Psoas muscle (tissue), 8 donors: ENCODE measurements at regions of chr21 and their contacts with region 1.

Region 1: DNA sequence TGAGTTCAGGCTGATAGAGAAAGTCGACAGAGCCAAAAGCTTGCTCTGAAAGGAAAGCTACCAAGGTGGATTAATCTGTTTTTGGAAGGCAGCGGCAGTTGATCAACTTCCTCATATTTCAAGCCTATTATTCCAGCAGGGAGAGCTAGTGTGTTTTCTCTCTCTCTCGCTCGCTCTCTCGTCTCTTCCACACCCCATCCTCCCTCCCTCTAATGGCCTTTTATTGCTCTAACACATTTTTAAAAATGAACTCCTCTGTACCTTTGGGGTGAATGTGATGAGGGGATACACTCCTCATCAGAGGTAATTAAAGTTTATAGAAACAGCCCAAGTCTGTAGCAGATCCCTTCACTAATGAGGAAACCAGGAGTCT is 126.4 kb downstream of the CLIC6 start:
- DNase-seq: no peak
- ATAC-seq: peak; percentile 21 to 68 (median 39)
- H3K4me3 ChIP-seq: peak overlapping the region; percentile 17
- H3K27ac ChIP-seq: peak overlapping the region; percentile 75
- H3K4me1 ChIP-seq: peaks cover 54% of the 10 kb centered on the region
- H3K27me3 ChIP-seq: no peaks in the 10 kb centered on the region
- CTCF ChIP-seq: peak; percentile 10

Region 2: GRCh38 chr21:34737107-34737506 is 58.1 kb before region 1 on chr21:
- intact Hi-C with region 1: loop called in 1 of 2 experiments (anchors 5 kb)
- DNase-seq: no peak
- ATAC-seq: peak; percentile 61 to 73 (median 68)
- H3K4me3 ChIP-seq: peak overlapping the region; percentile 31
- H3K27ac ChIP-seq: peak overlapping the region; percentile 90
- H3K4me1 ChIP-seq: peaks cover 40% of the 10 kb centered on the region
- H3K27me3 ChIP-seq: peaks cover 0 to 5% (median 0%) of the 10 kb centered on the region in 3 donors
- CTCF ChIP-seq: no peak

Region 3: DNA sequence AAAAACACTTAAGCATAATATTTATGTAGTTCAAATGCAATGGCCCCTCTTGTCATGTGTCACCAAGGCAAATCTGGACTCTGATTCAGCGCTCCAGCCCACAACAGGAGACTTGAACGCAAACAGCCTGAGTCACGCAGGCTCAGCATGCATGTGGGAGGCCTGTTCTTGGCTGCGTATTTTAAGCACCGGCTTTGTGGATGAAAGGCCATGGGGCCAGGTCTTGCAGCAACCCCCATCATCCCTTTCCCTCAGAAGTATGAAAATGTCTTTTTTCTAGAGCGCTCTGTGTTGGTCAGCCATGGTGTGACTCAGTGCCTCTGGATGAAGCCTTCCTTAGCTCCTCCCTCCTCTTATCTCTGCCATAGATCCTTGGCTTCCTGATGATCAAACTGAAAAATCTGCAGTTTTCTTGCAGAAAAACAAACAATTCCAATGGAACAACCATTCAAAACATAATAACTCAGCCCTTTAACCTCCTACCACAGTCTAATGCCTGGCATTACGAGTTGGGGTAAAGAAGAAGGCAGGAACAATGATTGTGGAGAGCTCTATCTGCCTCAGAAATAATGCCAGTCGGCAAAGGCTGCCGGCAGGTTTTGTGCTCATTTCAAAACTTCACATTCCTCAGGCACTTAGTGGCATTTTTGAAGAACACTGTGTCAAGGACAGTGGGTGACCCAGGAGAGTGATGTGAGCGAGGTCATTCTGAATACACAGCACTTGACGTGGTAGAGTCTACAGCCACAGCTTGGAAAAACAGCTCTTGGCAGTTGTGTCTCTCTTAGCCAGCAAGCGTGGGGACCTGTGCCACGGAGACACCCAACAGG is 41.2 kb after region 1 on chr21:
- intact Hi-C with region 1: loop called (anchors 5 kb)
- DNase-seq: peak; percentile 85 to 88
- ATAC-seq: peak; percentile 76 to 94 (median 90)
- H3K4me3 ChIP-seq: no peak overlapping the region
- H3K27ac ChIP-seq: peak overlapping the region; percentile 64
- H3K4me1 ChIP-seq: peaks cover 24% of the 10 kb centered on the region
- H3K27me3 ChIP-seq: no peaks in the 10 kb centered on the region
- CTCF ChIP-seq: no peak

Region 4: DNA sequence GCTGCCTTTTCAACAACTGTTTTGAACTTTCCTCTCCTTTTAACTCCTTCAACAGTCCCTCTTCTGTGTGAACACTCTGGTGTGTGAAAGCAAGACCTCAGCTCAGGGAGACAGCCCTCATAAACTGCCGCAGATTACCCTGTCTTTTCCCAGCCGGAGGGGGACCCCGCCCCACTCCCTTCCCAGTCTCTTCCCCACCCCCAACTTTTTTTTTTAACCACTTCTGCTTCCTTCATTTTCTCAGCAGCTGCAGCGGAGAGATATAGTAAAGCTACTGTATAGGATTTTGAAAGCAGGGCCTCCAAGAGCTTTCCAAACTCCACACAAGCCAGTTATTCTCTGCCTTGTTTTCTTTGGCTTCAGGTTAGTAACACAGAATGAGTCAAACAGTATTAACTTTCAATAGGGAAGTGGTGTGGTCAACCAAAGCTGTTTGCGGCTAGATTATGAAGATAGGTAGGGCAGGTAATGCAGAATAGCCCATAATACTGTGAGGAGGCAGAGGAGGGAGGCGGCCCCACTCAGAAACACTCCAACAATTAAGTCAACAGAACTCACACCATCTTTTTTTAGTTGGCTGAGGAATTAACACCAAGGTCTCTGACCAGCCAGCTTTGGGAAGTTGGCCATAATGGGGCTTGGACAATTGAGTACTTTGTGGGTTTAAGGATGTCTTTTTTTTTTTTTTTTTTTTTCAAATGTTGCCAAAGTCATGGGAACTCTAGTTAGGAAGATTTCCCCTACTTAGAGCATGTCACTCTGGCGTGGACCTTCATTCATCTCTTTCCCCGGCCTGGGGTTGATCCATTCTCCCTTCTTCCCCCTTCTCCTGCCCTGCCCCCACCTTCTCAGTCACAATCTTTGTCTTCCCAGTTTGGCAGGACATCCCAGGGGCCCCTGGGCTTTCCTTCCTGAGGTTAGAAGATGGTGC is 50.6 kb after region 1 on chr21:
- intact Hi-C with region 1: loop called in 1 of 2 experiments (anchors 5 kb)
- DNase-seq: no peak
- ATAC-seq: peak in 2 of 4 donors; percentile 4 to 15
- H3K4me3 ChIP-seq: peak overlapping the region; percentile 6
- H3K27ac ChIP-seq: peak overlapping the region; percentile 93
- H3K4me1 ChIP-seq: peaks cover 47% of the 10 kb centered on the region
- H3K27me3 ChIP-seq: no peaks in the 10 kb centered on the region
- CTCF ChIP-seq: no peak